SK-N-SH (cell line): ENCODE measurements at regions of chr20 and their contacts with region 1.

Region 1: DNA sequence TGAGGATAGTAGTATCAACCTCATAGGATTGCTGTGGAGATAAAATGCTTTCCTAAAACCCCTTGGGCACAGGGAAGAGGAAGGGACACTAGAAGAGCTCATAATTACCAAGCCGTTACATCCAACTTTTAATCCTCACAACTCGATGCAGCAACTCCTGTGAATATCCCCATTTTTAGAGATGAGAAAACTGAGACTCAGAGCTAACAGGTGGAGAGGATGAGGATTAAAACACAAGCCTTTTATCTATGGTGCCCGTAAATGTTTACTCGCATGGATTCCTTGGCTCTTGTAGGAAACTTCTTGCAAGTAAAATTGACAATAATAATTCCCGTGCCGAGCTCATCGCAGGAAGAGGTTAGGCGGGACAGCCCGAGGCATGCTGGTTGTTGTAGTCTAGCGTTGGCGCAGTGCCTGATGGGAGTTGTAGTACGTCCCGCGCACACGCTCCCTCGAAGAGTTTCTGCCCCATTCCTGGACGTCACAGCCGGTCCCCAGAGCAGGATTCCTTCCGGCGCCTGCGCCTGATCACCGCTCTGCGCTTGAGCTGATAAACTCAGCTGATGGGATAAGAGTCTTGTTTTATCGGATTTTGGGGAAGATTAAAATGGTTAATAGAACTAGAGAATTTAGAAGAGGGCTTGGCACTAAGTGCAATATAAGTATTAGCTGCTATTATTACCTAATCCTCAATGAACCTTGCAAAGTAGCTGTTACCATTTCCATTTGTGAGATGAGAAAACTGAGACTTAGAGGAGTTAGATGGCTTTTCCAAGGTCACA is 2.8 kb upstream of the UBE2V1 start:
- DNase-seq: peak; percentile 89
- H3K4me3 ChIP-seq: peak overlapping the region; percentile 64 to 70
- H3K27ac ChIP-seq: peak overlapping the region; percentile 52 to 85; a peak in 3 of 4 replicates
- H3K4me1 ChIP-seq: peaks cover 15 to 37% of the 10 kb centered on the region in 2 experiments; a peak in 3 of 4 replicates
- H3K27me3 ChIP-seq: no peaks in the 10 kb centered on the region
- CTCF ChIP-seq: no peak
- EP300 ChIP-seq: no peak
- RAD21 ChIP-seq: no peak

Region 2: DNA sequence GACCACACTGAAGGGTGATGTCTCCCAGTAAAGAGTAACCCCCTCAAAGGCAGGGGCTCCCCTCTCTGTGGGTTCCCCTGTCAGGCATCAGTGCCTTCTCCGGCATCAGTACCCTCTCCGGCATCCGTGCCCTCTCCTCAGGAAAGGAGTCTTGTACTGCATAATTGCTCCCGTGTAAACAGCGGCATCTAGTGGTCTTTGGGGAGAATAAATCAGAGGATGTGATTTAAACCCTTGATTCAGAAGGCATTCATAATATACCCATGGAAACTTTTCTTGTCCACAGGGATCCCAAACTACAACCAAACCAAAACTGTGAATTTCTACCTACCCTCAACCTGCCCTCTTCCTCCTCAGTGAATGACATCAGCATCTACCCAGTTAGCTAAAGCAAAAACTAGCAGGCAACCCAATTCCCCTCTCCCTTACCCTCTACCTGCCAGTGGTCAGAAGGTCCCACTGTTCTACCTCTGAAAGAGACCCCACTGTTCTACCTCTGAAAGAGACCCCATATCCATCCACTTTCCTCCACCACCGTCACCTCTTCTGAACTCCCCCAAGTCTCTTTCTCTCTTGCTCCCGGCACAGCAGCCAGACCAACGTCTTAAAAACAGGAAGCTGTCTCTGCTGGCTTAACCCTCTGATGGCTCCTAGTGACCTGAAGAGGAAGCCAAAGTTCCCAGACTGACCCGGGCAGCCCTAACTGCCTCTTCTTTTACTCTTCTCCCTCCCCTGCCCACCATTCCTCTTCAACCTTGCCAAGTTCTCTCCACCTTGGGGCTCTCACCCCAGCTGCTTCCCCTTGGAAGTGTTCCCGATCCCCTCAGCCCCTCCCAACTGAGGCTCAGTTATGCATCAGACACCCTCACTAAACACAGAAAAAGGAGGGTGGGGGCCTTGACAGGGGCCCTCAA is 30.1 kb before region 1 on chr20:
- CTCF ChIA-PET with region 1: interaction called, 48 read pairs
- POLR2A ChIA-PET with region 1: no interaction called
- DNase-seq: peak; percentile 79
- H3K4me3 ChIP-seq: no peak overlapping the region; a peak in 1 of 4 replicates
- H3K27ac ChIP-seq: peak overlapping the region; percentile 50 to 73
- H3K4me1 ChIP-seq: peaks cover 15 to 21% of the 10 kb centered on the region in 2 experiments
- H3K27me3 ChIP-seq: no peaks in the 10 kb centered on the region
- CTCF ChIP-seq: peak; percentile 88
- EP300 ChIP-seq: no peak
- RAD21 ChIP-seq: peak; percentile 80

Region 3: GRCh38 chr20:50153485-50154377 is 37.9 kb after region 1 on chr20 and contains the start of gene PEDS1:
- CTCF ChIA-PET with region 1: interaction called, 113 read pairs
- POLR2A ChIA-PET with region 1: interaction called, 16 read pairs
- DNase-seq: peak; percentile 99
- H3K4me3 ChIP-seq: peak within 1 kb of the TSS; percentile 78 to 97
- H3K27ac ChIP-seq: peak within 1 kb of the TSS; percentile 41 to 82; a peak in 3 of 4 replicates
- H3K4me1 ChIP-seq: peaks cover 3 to 32% of the 10 kb centered on the region in 2 experiments; a peak in 1 of 4 replicates
- H3K27me3 ChIP-seq: no peaks in the 10 kb centered on the region
- CTCF ChIP-seq: no peak
- EP300 ChIP-seq: peak in 1 of 2 experiments; percentile 23; a peak in 1 of 4 replicates
- RAD21 ChIP-seq: no peak; the same call in 1 of the 2 replicates
- polyA plus RNA-seq, gene PEDS1: 18.3 and 18.4 TPM in 2 replicates